ENCODE measurements at regions of chr7 and their contacts with region 1.

Region 1: GRCh38 chr7:108094933-108095710 is 35.0 kb downstream of the LAMB4 start:
- DNase-seq: peak; percentile 86 to 89
- H3K4me3 ChIP-seq: no peak overlapping the region
- H3K4me3 Mint-ChIP-seq: peak overlapping the region; percentile 62
- H3K27ac Mint-ChIP-seq: peak overlapping the region; percentile 63
- H3K4me1 ChIP-seq: peaks cover 76% of the 10 kb centered on the region
- H3K4me1 Mint-ChIP-seq: peaks cover 54% of the 10 kb centered on the region
- H3K27me3 ChIP-seq: no peaks in the 10 kb centered on the region
- H3K27me3 Mint-ChIP-seq: no peaks in the 10 kb centered on the region
- CTCF ChIP-seq: no peak

Region 2: GRCh38 chr7:108055611-108056021 is 39.5 kb before region 1 on chr7:
- CTCF ChIA-PET with region 1: no interaction called
- POLR2A ChIA-PET with region 1: no interaction called
- intact Hi-C with region 1: loop called (anchors 2 kb)
- DNase-seq: peak; percentile 45 to 76
- H3K4me3 ChIP-seq: no peak overlapping the region
- H3K4me3 Mint-ChIP-seq: no peak overlapping the region
- H3K27ac Mint-ChIP-seq: peak overlapping the region; percentile 48
- H3K4me1 ChIP-seq: peaks cover 28% of the 10 kb centered on the region
- H3K4me1 Mint-ChIP-seq: peaks cover 37% of the 10 kb centered on the region
- H3K27me3 ChIP-seq: no peaks in the 10 kb centered on the region
- H3K27me3 Mint-ChIP-seq: no peaks in the 10 kb centered on the region
- CTCF ChIP-seq: no peak